ENCODE measurements at regions of chrX and their contacts with region 1.

Region 1: GRCh38 chrX:104195489-104196084 is 29.3 kb downstream of the FAM199X start:
- DNase-seq: peak; percentile 33
- H3K4me3 ChIP-seq: no peak overlapping the region
- H3K27ac ChIP-seq: no peak overlapping the region
- H3K4me1 ChIP-seq: no peaks in the 10 kb centered on the region
- H3K27me3 ChIP-seq: no peaks in the 10 kb centered on the region
- CTCF ChIP-seq: peak; percentile 90
- EP300 ChIP-seq: no peak
- RAD21 ChIP-seq: peak; percentile 60

Region 2: GRCh38 chrX:103258275-103258674 is 937.3 kb before region 1 on chrX:
- CTCF ChIA-PET with region 1: no interaction called
- POLR2A ChIA-PET with region 1: no interaction called
- DNase-seq: no peak
- H3K4me3 ChIP-seq: no peak overlapping the region
- H3K27ac ChIP-seq: no peak overlapping the region
- H3K4me1 ChIP-seq: peaks cover 0 to 3% of the 10 kb centered on the region in 2 experiments; a peak in 2 of 4 replicates
- H3K27me3 ChIP-seq: no peaks in the 10 kb centered on the region
- CTCF ChIP-seq: no peak
- EP300 ChIP-seq: no peak
- RAD21 ChIP-seq: no peak

Region 3: DNA sequence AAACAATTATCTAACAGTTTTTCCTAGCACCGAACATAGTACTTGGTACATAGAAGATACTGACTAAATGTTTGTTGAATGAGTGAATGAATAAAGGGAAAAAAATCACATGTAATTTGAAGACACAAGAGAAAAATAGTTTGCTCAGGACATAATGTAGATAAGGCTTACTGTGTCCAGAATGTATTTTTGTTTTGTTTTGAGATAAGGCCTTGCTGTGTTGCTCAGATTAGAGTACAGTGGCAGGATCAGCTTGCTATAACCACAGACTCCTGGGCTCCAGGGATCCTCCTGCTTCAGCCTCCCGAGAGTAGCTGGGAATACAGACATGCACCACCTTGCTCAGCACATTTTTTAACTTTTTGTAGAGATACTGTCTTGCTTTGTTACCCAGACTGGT is 22.8 kb before region 1 on chrX:
- CTCF ChIA-PET with region 1: interaction called, 13 read pairs
- POLR2A ChIA-PET with region 1: no interaction called
- DNase-seq: no peak
- H3K4me3 ChIP-seq: no peak overlapping the region
- H3K27ac ChIP-seq: no peak overlapping the region
- H3K4me1 ChIP-seq: no peaks in the 10 kb centered on the region; a peak in 2 of 4 replicates
- H3K27me3 ChIP-seq: peaks cover 3% of the 10 kb centered on the region; the same call in 1 of the 2 replicates
- CTCF ChIP-seq: no peak
- EP300 ChIP-seq: no peak
- RAD21 ChIP-seq: no peak

Region 4: GRCh38 chrX:104183685-104184084 is 11.9 kb before region 1 on chrX:
- CTCF ChIA-PET with region 1: interaction called, 18 read pairs
- POLR2A ChIA-PET with region 1: no interaction called
- DNase-seq: no peak
- H3K4me3 ChIP-seq: no peak overlapping the region
- H3K27ac ChIP-seq: no peak overlapping the region
- H3K4me1 ChIP-seq: no peaks in the 10 kb centered on the region
- H3K27me3 ChIP-seq: 0 out of 2 replicates have a peak, but pooled peaks cover 3% of the 10 kb centered on the region
- CTCF ChIP-seq: no peak
- EP300 ChIP-seq: no peak
- RAD21 ChIP-seq: no peak

Region 5: DNA sequence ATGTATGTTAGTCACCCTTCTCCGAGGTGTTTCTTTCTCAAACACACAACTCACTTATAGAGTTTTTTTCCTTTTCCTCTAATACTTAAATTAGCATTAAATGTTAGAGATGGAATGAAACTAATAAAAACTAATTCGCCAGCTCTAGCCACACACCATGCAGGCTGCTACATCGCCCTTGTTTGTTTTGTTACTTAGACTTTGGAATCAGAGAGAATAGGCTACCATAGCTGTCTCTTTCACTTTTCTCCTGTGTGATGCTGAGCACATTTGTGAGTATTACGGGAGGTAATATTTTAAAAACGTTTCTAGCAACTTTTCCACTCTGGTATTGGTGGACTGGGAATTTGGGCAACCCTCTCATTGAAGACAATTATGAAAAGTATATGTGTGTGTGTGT is 15.6 kb after region 1 on chrX:
- CTCF ChIA-PET with region 1: interaction called, 21 read pairs
- POLR2A ChIA-PET with region 1: no interaction called
- DNase-seq: no peak
- H3K4me3 ChIP-seq: no peak overlapping the region
- H3K27ac ChIP-seq: no peak overlapping the region
- H3K4me1 ChIP-seq: no peaks in the 10 kb centered on the region
- H3K27me3 ChIP-seq: peaks cover 4% of the 10 kb centered on the region; the same call in 1 of the 2 replicates
- CTCF ChIP-seq: no peak
- EP300 ChIP-seq: no peak
- RAD21 ChIP-seq: no peak

Region 6: DNA sequence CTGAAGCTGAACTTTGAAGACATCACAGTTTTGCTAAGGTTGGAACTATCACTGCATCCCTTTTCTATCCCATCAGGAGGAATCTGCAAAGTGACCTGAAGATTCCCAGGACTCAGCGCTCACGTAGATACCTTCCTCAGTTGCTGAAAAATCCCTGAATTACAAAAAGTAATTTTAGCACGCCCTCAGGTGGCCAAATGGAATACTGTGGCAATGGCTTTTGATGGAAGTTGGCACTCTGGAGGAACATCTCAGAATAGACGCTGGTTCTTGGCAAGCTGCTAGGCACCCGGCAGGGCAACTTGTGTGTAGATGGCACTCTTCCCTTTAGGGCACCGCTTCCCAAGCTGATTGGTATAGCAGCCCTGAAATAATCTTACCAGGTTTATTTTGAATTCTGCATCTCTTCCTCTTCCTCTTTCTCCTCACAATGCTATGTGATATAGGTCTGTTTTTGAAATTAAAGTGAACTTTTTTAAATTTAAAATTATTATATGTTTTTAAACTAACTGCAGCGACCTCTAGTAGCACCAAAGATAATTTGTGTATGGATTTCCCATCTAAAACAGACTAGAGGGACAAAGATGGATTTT is 75.4 kb after region 1 on chrX:
- CTCF ChIA-PET with region 1: interaction called, 10 read pairs
- POLR2A ChIA-PET with region 1: no interaction called
- DNase-seq: no peak
- H3K4me3 ChIP-seq: peak overlapping the region; percentile 37 to 51
- H3K27ac ChIP-seq: no peak overlapping the region
- H3K4me1 ChIP-seq: no peaks in the 10 kb centered on the region
- H3K27me3 ChIP-seq: peaks cover 52% of the 10 kb centered on the region
- CTCF ChIP-seq: peak; percentile 84
- EP300 ChIP-seq: no peak
- RAD21 ChIP-seq: peak; percentile 62

Measured in SK-N-SH (cell line).